ENCODE measurements at regions of chr9 and their contacts with region 1.

Region 1: GRCh38 chr9:38263532-38263931 is 129.0 kb upstream of the ALDH1B1 start:
- DNase-seq: no peak
- H3K4me3 ChIP-seq: no peak overlapping the region
- H3K27ac ChIP-seq: no peak overlapping the region
- H3K27me3 ChIP-seq: peaks cover 16% of the 10 kb centered on the region
- CTCF ChIP-seq: peak; percentile 56

Region 2: DNA sequence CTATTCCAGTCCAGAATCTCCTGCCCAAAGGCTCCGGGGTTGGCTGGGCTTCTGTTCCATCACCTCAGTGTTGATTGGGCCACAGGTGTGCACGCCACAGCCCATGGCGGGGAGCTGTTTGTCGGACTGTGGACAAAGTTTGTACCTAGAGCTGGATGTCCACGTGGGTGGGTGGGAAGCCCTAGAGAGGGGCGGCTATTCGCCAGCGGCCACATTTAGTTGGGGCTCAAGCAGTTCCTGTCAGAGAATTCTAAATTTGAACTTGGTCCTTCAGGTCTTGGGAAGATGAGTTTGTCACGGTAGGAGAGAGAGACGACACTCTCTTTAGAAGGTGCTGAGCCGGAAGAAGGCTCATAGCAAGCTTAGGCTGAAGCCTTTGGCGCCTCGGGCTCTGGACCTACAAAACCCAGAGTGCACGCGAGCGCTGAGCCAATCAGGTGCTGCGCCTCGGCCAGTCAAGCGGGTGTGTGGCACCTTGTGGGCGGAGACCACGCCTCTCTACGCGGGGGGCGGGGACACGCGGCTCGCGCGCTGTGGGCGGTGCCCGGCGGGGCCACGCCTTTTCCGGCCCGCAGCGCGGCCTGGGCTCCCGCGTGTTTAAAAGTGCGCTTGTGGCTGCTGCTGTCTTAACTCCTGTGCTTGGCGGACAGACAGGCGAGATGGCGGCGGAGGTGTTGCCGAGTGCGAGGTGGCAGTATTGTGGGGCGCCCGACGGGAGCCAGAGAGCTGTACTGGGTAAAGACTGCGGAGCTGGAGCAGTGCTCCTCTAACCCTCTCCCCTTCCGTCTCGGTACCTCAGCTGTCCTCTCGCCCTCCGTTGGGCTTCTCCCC is 777.9 kb before region 1 on chr9 and contains the start of gene POLR1E:
- CTCF ChIA-PET with region 1: interaction called, 10 read pairs
- POLR2A ChIA-PET with region 1: no interaction called
- DNase-seq: peak; percentile 76
- H3K4me3 ChIP-seq: peak within 1 kb of the TSS; percentile 95
- H3K27ac ChIP-seq: peak within 1 kb of the TSS; percentile 97
- H3K27me3 ChIP-seq: peaks cover 2% of the 10 kb centered on the region
- CTCF ChIP-seq: no peak
- polyA plus RNA-seq, gene POLR1E: 42.2 and 44.5 TPM in 2 replicates

Region 3: GRCh38 chr9:37746848-37747753 is 516.4 kb before region 1 on chr9:
- CTCF ChIA-PET with region 1: interaction called, 14 read pairs
- POLR2A ChIA-PET with region 1: no interaction called
- DNase-seq: peak; percentile 50
- H3K4me3 ChIP-seq: no peak overlapping the region
- H3K27ac ChIP-seq: peak overlapping the region; percentile 57
- H3K27me3 ChIP-seq: peaks cover 10% of the 10 kb centered on the region
- CTCF ChIP-seq: peak; percentile 97

Region 4: DNA sequence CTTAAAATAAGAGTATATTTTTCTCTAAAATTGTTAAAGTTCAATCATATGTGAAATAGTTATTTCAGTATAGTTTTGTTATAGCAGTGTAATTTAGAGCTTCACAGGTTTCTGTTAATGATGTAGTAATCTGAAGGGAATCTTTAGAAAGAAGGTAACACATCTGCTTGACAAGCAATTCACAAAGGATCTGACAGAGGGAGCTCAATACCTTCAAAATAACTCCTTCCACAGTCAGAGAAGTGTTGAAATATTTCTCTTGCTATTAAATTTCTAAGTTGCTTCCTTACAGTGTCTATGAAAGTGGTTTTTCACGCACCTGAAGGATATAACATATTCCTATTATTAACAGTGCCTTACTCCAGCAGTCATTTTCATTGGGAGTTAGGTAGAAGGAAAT is 404.5 kb before region 1 on chr9:
- CTCF ChIA-PET with region 1: interaction called, 23 read pairs
- POLR2A ChIA-PET with region 1: no interaction called
- DNase-seq: no peak
- H3K4me3 ChIP-seq: no peak overlapping the region
- H3K27ac ChIP-seq: no peak overlapping the region
- H3K27me3 ChIP-seq: no peaks in the 10 kb centered on the region
- CTCF ChIP-seq: peak; percentile 17; the same call in 1 of the 2 replicates

Region 5: DNA sequence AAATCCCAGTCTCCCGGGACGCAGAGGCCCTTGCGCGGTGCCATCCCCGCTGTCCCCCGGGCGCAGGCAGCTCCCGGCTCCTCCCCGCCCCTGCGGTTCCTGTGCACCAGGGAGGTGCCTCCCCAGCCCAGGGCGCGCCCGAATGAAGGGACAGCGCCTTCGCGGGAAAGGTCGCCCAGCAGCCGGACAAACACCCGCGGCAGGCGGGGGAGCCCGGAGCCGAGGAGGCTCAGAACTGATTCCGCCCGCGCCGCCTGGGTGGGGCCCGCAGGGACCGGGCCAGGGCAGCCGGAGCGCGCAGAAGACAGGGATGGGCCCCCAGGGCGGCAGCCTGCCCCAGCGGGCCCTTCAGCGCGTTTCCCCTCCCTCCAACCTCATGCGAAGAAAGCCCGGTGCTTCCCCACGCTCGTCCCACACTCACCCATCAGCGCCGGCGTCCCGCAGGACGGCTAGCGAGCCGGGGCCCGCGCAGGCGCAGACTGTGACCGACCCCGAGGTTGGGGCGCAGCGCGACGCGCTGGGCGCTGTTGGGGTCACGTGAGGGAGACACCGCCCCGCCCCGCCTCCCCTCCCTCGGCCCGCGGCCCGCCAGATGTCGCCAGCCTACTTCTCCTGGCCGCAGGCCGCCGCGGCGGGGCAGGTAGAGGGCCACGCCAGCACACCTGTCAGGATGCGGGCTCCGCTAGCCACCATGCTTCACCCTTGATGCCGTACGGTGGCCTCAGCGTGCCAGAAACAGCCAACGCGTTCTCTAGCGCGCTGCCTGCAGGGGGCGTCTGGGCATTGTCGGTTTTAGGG is 359.7 kb before region 1 on chr9 and contains the start of gene SLC25A51:
- CTCF ChIA-PET with region 1: interaction called, 19 read pairs
- POLR2A ChIA-PET with region 1: no interaction called
- DNase-seq: peak; percentile 77
- H3K4me3 ChIP-seq: peak within 1 kb of the TSS; percentile 83
- H3K27ac ChIP-seq: peak within 1 kb of the TSS; percentile 67
- H3K27me3 ChIP-seq: no peaks in the 10 kb centered on the region
- CTCF ChIP-seq: peak; percentile 94
- polyA plus RNA-seq, gene SLC25A51: 27.7 and 29.9 TPM in 2 replicates

Region 6: GRCh38 chr9:37913480-37914153 is 349.9 kb before region 1 on chr9:
- CTCF ChIA-PET with region 1: interaction called, 82 read pairs
- POLR2A ChIA-PET with region 1: no interaction called
- DNase-seq: no peak
- H3K4me3 ChIP-seq: no peak overlapping the region
- H3K27ac ChIP-seq: no peak overlapping the region
- H3K27me3 ChIP-seq: no peaks in the 10 kb centered on the region
- CTCF ChIP-seq: peak; percentile 99

Region 7: GRCh38 chr9:38088006-38088925 is 175.3 kb before region 1 on chr9:
- CTCF ChIA-PET with region 1: interaction called, 10 read pairs
- POLR2A ChIA-PET with region 1: no interaction called
- DNase-seq: no peak
- H3K4me3 ChIP-seq: no peak overlapping the region
- H3K27ac ChIP-seq: no peak overlapping the region
- H3K27me3 ChIP-seq: no peaks in the 10 kb centered on the region
- CTCF ChIP-seq: peak; percentile 96

Region 8: GRCh38 chr9:38284588-38285051 is 21.1 kb after region 1 on chr9:
- CTCF ChIA-PET with region 1: no interaction called
- POLR2A ChIA-PET with region 1: no interaction called
- DNase-seq: no peak
- H3K4me3 ChIP-seq: no peak overlapping the region
- H3K27ac ChIP-seq: no peak overlapping the region
- H3K27me3 ChIP-seq: peaks cover 24% of the 10 kb centered on the region
- CTCF ChIP-seq: no peak

Region 9: DNA sequence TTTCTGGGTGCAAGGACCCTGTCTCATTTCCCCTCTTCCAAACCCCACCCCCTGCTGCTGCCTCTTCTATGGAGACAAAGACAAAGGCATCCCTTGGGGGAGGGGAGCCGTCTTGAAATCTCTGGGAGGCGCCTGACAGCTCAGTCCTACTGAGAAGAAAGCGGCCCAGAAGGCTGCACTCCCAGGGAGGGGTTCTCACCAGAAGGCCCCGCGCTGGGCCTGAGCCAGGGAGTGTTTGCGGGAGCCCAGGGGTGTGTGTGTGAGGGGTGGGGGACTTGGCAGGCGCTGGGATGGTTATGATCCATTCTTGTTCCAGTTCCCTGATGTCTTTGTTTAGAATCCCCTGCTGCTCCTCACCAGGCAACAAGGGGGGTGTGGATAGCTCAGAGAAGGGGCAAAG is 83.3 kb after region 1 on chr9:
- CTCF ChIA-PET with region 1: no interaction called
- POLR2A ChIA-PET with region 1: no interaction called
- DNase-seq: no peak
- H3K4me3 ChIP-seq: no peak overlapping the region
- H3K27ac ChIP-seq: no peak overlapping the region
- H3K27me3 ChIP-seq: peaks cover 37% of the 10 kb centered on the region
- CTCF ChIP-seq: no peak